ENCODE measurements at regions of chr10 and their contacts with region 1.

Region 1: GRCh38 chr10:25357269-25357668 is 182.5 kb downstream of the GPR158 start:
- DNase-seq: no peak
- ATAC-seq: no peak
- H3K4me3 ChIP-seq: no peak overlapping the region
- H3K27ac ChIP-seq: no peak overlapping the region
- H3K4me1 ChIP-seq: no peaks in the 10 kb centered on the region
- H3K27me3 ChIP-seq: no peaks in the 10 kb centered on the region
- CTCF ChIP-seq: no peak

Region 2: DNA sequence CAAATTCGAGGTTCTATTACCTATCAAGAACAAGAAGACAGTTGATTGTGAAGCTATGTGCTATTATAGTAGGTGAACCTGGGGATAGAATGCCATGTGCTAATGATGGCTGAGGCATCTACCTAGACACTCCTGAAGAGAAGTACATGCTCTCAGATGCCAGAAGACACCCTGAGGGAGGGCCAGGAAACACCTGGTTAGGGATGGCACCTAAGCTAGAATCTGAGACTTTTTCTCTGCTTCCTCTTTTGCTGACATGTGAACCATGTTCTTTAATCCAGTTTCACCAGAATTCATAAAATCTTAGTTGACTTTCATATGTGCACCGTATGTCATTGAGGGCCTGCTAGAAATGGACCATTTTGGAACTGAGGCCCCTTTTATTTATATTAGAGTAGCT is 60.3 kb after region 1 on chr10:
- intact Hi-C with region 1: loop called in 1 of 10 experiments (anchors 10 kb)
- DNase-seq: no peak
- ATAC-seq: no peak
- H3K4me3 ChIP-seq: no peak overlapping the region
- H3K27ac ChIP-seq: no peak overlapping the region
- H3K4me1 ChIP-seq: no peaks in the 10 kb centered on the region
- H3K27me3 ChIP-seq: no peaks in the 10 kb centered on the region
- CTCF ChIP-seq: no peak